HepG2 (cell line): ENCODE measurements at regions of chr5 and their contacts with region 1.

Region 1: DNA sequence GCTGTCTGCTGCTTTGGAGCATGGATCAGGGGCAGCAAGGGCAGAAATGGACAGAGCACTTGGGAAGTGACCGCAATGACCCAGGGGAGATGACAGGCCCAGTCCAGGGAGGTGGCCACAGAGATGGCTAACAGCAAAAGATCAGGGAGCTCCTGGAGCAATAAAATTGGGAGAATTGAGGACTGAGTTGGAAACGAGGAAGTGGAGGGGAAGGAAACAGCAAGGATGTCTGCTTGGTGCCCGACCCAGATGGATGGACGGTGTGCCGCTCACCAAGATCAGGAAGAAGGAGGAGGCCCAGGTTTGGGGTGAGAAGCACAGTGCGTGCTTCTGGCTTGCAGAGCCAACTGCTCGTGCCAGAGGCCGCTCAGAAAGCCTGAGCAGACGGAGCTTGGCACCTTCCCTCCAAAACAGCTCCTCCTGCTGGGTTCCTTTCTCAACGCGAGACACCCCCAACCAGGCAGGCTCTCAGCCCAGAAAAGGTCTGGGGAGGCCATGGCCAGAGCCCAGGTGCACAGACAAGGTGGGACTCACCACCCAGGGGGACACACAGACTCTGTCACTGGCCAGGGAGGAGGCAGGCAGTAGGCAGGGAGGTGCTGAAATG is 1.7 kb upstream of the SLC34A1 start:
- DNase-seq: no peak
- ATAC-seq: peak; percentile 10
- H3K4me3 ChIP-seq: no peak overlapping the region
- H3K27ac ChIP-seq: no peak overlapping the region
- H3K4me1 ChIP-seq: peaks cover 72% of the 10 kb centered on the region
- H3K27me3 ChIP-seq: peaks cover 7 to 16% of the 10 kb centered on the region in 2 experiments; a peak in 3 of 5 replicates
- CTCF ChIP-seq: peak; percentile 71
- EP300 ChIP-seq: no peak
- POLR2A ChIP-seq: no peak
- RAD21 ChIP-seq: peak; percentile 60; the same call in 1 of the 2 replicates

Region 2: DNA sequence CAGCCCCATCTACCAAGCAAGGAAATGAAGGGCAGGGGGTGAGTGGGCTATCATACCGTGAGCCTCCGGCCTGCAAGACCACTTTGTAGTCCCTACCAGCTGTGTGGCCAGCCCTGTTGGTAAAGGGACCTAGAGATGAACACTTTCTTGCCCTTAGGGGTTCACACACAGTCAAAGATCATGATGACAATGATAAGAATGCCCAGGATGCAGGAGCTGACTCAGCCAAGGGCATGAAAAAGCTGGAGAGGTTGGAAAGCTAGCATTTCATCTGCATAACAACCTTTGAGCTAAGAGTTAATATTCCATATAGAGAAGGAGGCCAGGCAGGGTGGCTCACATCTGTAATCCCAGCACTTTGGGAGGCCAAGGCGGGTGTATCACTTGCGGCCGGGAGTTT is 315.0 kb before region 1 on chr5:
- CTCF ChIA-PET with region 1: no interaction called
- POLR2A ChIA-PET with region 1: no interaction called
- in situ Hi-C with region 1: no loop called
- intact Hi-C with region 1: no loop called
- DNase-seq: no peak
- ATAC-seq: no peak
- H3K4me3 ChIP-seq: no peak overlapping the region
- H3K27ac ChIP-seq: no peak overlapping the region
- H3K4me1 ChIP-seq: peaks cover 11% of the 10 kb centered on the region
- H3K27me3 ChIP-seq: no peaks in the 10 kb centered on the region
- CTCF ChIP-seq: no peak
- EP300 ChIP-seq: no peak
- POLR2A ChIP-seq: no peak
- RAD21 ChIP-seq: no peak

Region 3: DNA sequence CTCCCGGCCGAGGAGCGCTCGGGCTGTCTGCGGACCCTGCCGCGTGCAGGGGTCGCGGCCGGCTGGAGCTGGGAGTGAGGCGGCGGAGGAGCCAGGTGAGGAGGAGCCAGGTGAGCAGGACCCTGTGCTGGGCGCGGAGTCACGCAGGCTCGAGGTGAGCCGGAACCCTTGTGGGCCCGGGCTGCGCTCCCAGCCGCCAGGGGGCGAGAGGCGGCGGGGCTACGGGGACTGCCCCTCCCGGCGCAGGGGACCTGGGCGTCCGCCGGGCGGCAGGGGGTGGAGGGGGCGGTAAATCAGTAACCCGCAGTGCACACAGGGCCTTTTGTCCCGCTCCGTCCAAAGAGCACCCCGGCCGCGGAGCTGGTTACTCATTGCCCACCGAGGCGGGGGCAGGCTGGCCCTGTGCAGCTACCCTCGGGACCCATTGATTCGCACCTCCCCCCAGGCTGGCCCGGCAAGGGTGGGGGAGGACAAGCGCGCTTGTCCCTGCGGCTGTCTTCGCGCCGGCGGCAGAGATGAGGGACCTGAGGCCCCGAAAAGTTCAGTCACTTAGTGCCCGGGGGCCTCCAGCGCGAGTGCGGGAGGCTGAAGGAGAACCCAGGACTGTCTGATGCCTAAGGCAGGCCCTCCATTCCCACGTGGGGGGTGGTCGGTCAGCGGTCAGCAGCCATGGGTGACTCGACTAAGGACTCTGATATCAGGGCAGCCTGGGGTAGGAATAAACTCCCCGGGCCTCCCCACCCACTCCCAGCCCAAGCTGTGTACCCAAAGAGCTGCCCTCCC is 295.4 kb before region 1 on chr5:
- CTCF ChIA-PET with region 1: no interaction called
- POLR2A ChIA-PET with region 1: interaction called, 14 read pairs
- in situ Hi-C with region 1: no loop called
- intact Hi-C with region 1: no loop called
- DNase-seq: peak; percentile 96
- ATAC-seq: peak; percentile 89
- H3K4me3 ChIP-seq: peak overlapping the region; percentile 91 to 99 (median 93)
- H3K27ac ChIP-seq: peak overlapping the region; percentile 100
- H3K4me1 ChIP-seq: peaks cover 68% of the 10 kb centered on the region
- H3K27me3 ChIP-seq: no peaks in the 10 kb centered on the region; a peak in 1 of 5 replicates
- CTCF ChIP-seq: peak; percentile 95
- EP300 ChIP-seq: peak; percentile 83 to 90; a peak in 2 of 4 replicates
- POLR2A ChIP-seq: peak in 1 of 2 experiments; percentile 89; a peak in 2 of 4 replicates
- RAD21 ChIP-seq: peak; percentile 94

Region 4: DNA sequence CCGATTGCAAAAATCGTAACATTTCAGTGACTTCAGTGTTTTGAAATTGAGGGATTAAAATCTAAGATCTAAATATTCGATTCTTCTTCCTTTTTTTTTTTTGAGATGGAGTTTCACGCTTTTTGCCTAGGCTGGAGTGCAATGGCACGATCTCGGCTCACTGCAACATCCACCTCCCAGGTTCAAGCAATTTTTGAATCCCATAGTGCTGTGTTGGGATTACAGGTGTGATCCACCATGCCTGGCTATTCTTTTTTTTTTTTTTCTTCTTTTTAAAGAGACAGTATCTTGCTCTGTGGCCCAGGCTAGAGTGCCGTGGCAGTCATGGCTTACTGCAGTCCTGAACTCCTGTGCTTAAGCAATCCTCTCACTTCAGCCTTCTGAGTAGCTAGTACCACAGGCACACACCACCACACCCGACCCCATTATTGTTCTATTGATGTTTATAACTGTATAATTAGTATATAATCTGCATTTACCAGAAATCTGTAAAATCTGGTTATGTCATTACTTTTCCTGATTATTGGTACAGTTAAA is 206.3 kb before region 1 on chr5:
- CTCF ChIA-PET with region 1: no interaction called
- POLR2A ChIA-PET with region 1: no interaction called
- in situ Hi-C with region 1: no loop called
- intact Hi-C with region 1: no loop called
- DNase-seq: no peak
- ATAC-seq: no peak
- H3K4me3 ChIP-seq: no peak overlapping the region
- H3K27ac ChIP-seq: no peak overlapping the region
- H3K4me1 ChIP-seq: no peaks in the 10 kb centered on the region
- H3K27me3 ChIP-seq: no peaks in the 10 kb centered on the region
- CTCF ChIP-seq: no peak
- EP300 ChIP-seq: no peak
- POLR2A ChIP-seq: no peak
- RAD21 ChIP-seq: no peak

Region 5: GRCh38 chr5:177351385-177352329 is 30.9 kb before region 1 on chr5 and contains the start of gene LMAN2:
- CTCF ChIA-PET with region 1: no interaction called
- POLR2A ChIA-PET with region 1: interaction called, 77 read pairs
- in situ Hi-C with region 1: no loop called
- intact Hi-C with region 1: no loop called
- DNase-seq: peak; percentile 91
- ATAC-seq: peak; percentile 97
- H3K4me3 ChIP-seq: peak within 1 kb of the TSS; percentile 92 to 98 (median 93)
- H3K27ac ChIP-seq: peak within 1 kb of the TSS; percentile 94
- H3K4me1 ChIP-seq: peaks cover 86% of the 10 kb centered on the region
- H3K27me3 ChIP-seq: no peaks in the 10 kb centered on the region; a peak in 1 of 5 replicates
- CTCF ChIP-seq: no peak
- EP300 ChIP-seq: no peak; a peak in 1 of 4 replicates
- POLR2A ChIP-seq: peak; percentile 68
- RAD21 ChIP-seq: peak; percentile 27; the same call in 1 of the 2 replicates
- total RNA-seq, gene LMAN2: 94.5 and 191 TPM in 2 replicates

Region 6: GRCh38 chr5:177370488-177371119 is 11.9 kb before region 1 on chr5:
- CTCF ChIA-PET with region 1: interaction called, 9 read pairs
- POLR2A ChIA-PET with region 1: interaction called, 239 read pairs
- in situ Hi-C with region 1: no loop called
- intact Hi-C with region 1: loop called (anchors 1 kb)
- DNase-seq: peak; percentile 94
- ATAC-seq: peak; percentile 82
- H3K4me3 ChIP-seq: peak overlapping the region in 2 of 3 experiments; percentile 74 to 92; a peak in 3 of 6 replicates
- H3K27ac ChIP-seq: peak overlapping the region; percentile 35
- H3K4me1 ChIP-seq: peaks cover 74% of the 10 kb centered on the region
- H3K27me3 ChIP-seq: no peaks in the 10 kb centered on the region; a peak in 1 of 5 replicates
- CTCF ChIP-seq: peak; percentile 92
- EP300 ChIP-seq: no peak
- POLR2A ChIP-seq: no peak
- RAD21 ChIP-seq: peak; percentile 95

Region 7: DNA sequence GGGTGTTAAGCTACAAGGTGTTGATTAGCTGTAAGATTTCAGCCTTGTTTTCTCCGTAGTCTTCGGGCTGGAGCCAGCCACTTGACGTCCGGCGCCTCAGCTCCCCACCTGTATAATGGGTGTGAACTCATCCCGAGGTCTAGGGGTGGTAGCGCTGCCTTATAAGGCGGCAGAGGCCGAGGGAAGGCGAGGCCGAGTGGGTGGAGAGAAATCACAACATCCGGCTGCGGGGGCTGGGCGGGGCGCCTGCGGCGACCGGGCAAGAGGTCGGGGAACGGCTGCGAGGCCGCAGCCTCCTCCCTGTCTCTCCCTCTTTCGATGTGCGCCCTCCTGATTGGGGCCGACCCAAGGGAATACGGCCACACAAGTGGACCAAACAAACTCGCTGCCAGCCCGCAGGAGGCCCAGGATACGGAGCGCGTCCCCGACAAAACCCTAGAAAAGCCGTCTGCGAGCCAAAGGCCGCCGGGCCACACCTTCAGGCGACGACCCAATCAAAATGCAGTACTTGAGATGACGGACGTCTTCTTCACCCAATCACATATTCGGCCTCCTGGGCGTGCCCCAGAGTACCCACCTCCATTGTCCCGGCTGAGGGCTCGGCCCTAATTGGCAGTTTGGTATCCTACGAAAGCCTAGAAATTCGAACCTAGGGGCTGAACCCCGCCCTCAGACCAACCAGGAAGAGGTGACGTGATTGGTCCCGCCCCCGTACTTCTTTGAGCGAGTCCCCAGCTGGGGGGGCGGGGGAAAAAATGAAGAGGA is 43.5 kb after region 1 on chr5:
- CTCF ChIA-PET with region 1: no interaction called
- POLR2A ChIA-PET with region 1: interaction called, 30 read pairs
- in situ Hi-C with region 1: no loop called
- intact Hi-C with region 1: no loop called
- DNase-seq: peak; percentile 100
- ATAC-seq: peak; percentile 94
- H3K4me3 ChIP-seq: peak overlapping the region; percentile 47 to 73 (median 62); a peak in 5 of 6 replicates
- H3K27ac ChIP-seq: peak overlapping the region; percentile 83
- H3K4me1 ChIP-seq: peaks cover 43% of the 10 kb centered on the region
- H3K27me3 ChIP-seq: peaks cover 0 to 14% of the 10 kb centered on the region in 2 experiments; a peak in 2 of 5 replicates
- CTCF ChIP-seq: no peak
- EP300 ChIP-seq: no peak
- POLR2A ChIP-seq: peak in 1 of 2 experiments; percentile 70; a peak in 1 of 4 replicates
- RAD21 ChIP-seq: peak; percentile 45; the same call in 1 of the 2 replicates

Region 8: DNA sequence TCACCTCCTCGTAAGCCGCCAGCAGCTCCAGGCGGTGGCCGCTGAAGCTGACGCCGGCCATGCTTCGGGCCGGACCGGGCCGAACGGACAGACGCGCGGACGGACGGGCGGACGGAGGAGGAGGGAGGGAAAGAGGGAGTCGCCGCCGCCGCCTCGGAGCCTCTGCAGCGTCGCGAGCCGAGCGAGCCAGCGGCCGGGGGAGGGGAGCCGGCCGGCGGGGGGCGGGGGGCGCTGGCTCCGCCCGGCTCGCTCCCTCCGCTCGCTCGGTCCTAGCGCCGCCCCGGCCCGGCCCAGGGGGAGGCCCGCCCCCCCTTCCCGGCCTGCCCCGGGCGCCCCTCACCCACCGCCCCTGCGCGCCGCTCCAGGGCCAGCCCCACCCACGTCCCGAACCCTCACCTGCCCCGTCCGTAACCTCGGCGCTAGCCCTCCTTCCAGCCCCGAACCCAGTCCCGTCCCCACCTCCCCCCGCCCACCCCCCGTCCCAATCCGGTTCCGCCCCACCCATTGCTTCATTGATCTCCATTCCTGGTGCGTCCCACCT is 91.0 kb after region 1 on chr5 and contains the start of gene DBN1:
- CTCF ChIA-PET with region 1: no interaction called
- POLR2A ChIA-PET with region 1: interaction called, 12 read pairs
- in situ Hi-C with region 1: no loop called
- intact Hi-C with region 1: no loop called
- DNase-seq: no peak
- ATAC-seq: peak; percentile 26
- H3K4me3 ChIP-seq: peak within 1 kb of the TSS; percentile 65 to 77 (median 73)
- H3K27ac ChIP-seq: no peak within 1 kb of the TSS
- H3K4me1 ChIP-seq: peaks cover 63% of the 10 kb centered on the region
- H3K27me3 ChIP-seq: no peaks in the 10 kb centered on the region
- CTCF ChIP-seq: no peak
- EP300 ChIP-seq: no peak
- POLR2A ChIP-seq: peak in 1 of 2 experiments; percentile 50; a peak in 1 of 4 replicates
- RAD21 ChIP-seq: no peak
- total RNA-seq, gene DBN1: 15.7 and 37.3 TPM in 2 replicates

Region 9: DNA sequence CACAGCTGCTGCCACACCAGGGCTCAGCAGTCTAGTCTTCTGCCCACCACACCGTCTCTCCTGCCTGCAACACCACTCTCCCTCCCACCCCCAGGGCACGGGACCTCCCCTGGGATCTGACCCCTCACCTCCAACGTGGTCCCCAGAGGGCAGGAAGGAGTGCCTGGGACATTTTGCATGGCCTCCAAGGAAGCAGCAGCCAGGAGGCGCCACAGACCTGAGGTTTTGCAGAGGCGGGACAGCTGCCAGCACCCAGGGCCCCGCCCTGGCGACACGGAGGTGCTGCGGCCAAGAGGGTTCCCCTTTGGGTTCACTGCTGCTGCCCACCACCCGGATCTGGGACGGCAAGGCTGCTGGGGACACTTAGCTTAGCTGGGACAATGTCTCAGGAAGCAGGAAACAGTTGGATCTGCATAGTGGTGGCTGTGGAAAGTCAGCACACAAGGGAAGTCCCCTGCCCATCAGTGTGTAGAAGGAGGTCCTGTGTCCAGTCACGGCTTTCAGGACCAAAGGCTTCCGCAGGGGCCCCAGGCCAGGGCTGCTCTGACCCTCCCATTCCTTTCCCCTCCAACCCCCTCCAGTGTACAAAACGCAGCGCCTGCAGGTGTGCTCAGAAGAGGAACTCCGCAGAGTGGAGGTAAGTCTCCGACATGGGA is 599.7 kb after region 1 on chr5:
- CTCF ChIA-PET with region 1: no interaction called
- POLR2A ChIA-PET with region 1: no interaction called
- in situ Hi-C with region 1: no loop called
- intact Hi-C with region 1: no loop called
- DNase-seq: peak; percentile 7
- ATAC-seq: peak; percentile 71
- H3K4me3 ChIP-seq: no peak overlapping the region
- H3K27ac ChIP-seq: no peak overlapping the region
- H3K4me1 ChIP-seq: no peaks in the 10 kb centered on the region
- H3K27me3 ChIP-seq: peaks cover 5 to 47% of the 10 kb centered on the region in 2 experiments; a peak in 4 of 5 replicates
- CTCF ChIP-seq: peak; percentile 57
- EP300 ChIP-seq: no peak
- POLR2A ChIP-seq: no peak
- RAD21 ChIP-seq: no peak